HEK293T (cell line): ENCODE measurements at regions of chr17 and their contacts with region 1.

Region 1: DNA sequence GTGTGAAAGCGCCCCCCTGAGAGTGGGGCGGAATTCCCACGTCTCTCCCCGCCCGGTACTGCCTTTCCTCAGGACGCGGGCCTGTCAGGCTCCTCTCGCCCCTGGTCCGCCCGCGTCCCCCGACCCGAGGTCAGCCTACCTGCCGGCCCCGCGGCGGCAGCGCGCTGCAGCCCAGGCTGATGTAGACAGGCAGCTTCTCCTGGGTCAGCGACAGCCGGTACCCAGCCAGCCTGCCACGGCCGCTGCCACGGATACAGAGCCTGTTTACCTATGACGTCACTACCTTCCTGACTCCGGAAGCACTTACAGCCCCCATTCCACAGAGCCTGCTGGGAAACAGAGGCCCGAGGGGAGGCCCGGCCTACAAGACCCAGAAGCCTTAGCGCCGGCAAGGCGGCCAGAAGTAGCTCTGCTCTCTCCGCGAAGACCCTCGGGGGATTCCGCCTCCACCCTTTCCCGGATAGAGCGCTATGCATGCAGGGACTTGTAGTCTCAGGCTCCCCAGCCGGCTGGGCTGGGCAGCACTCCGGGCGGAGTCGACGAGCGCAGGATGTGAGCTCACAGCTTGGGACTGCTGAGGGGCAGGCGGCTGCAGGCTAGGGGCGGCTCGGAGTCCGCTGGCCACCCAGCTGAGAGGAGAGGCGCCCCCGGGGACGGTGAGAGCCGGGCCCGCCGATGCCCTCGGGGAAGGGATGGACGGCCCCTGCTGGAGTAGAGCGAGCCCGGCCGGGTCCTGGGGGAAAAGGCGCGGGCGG is at the starts of genes IFT20 and TNFAIP1:
- DNase-seq: peak; percentile 88

Region 2: DNA sequence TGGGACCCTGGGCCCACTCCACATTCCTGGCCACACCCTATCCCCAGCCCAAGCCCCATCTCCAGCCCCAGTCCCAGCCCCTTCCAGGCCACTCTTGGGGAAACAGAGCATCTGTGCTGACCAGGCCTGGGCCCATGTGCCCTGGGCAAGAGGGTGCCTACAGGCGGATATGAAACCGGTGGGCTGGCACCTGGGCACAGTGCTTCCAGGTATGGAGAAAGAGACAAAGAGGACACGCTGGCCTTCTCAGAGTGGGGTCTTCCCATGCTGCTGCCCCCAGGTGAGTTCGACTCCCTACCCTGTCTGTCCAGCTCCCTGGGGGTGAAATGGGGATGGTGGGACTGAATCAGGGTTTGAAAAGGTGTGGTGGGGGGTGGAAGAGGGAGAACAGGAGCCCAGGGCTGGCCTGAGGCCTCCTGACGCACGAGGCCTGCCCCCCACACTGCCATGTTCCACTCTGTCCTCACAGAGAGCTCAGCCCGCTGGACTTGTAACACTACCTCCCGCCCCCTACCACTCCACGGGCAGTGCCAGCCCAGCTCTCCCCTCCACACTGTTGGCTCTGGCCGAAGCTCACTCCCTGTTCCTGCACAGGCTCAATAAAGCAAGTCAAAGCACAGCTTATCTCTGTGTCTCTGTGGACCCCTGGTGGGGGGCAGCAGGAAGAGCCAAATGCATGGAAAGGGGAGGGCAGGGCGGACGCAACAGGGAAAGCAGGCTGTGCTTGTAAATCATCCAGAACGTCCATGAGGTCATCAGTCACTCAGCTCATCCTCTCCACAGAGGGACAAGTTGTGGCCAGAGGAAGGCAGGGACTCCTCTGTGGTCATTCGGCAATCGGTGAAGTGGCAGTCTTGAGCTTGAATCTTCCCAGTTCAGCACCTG is 87.5 kb before region 1 on chr17:
- CTCF ChIA-PET with region 1: interaction called, 4 read pairs
- POLR2A ChIA-PET with region 1: interaction called, 17 read pairs
- DNase-seq: no peak

Region 3: GRCh38 chr17:28346746-28347246 is 11.4 kb after region 1 on chr17:
- CTCF ChIA-PET with region 1: interaction called, 3 read pairs
- POLR2A ChIA-PET with region 1: interaction called, 18 read pairs
- DNase-seq: no peak

Region 4: DNA sequence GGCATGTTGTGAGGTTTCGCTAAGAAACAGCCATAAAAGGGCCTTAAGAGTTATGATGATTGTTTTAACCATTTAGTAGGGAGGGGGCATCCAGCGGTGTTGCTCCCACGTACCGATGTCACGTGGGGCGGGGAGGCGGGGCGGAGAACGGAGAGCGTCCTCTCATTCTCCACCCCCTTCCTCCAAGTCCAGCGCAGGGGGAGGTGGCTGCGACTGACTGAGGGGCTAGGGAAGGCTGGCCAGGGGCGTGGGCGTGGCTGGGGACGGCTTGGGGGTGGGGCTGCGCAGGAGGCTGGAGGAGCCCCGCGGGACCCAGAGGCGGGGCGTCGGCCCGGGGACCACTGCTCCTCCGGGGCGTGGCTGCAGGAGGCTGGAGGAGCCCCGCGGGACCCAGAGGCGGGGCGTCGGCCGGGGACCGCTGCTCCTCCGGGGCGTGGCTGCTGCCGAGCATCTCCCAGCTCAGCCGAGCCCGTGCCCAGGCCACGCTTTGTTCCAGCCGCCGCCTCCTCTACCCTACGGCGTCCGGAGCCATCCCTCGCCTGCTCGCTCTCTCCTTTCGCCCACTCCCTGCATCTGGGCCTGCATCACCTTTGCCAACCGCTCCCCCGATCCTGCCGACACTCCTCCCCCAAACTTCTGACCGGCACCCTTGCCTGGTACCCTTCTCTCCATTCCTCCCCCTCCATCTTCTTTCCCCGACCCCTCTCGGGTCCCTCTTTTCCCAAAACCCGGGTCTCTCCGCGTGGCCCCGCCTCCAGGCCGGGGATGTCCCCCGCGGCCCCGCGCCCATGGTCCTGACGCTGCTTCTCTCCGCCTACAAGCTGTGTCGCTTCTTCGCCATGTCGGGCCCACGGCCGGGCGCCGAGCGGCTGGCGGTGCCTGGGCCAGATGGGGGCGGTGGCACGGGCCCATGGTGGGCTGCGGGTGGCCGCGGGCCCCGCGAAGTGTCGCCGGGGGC is 36.1 kb after region 1 on chr17 and contains the start of gene SARM1:
- CTCF ChIA-PET with region 1: interaction called, 3 read pairs
- POLR2A ChIA-PET with region 1: interaction called, 17 read pairs
- DNase-seq: peak; percentile 83

Region 5: DNA sequence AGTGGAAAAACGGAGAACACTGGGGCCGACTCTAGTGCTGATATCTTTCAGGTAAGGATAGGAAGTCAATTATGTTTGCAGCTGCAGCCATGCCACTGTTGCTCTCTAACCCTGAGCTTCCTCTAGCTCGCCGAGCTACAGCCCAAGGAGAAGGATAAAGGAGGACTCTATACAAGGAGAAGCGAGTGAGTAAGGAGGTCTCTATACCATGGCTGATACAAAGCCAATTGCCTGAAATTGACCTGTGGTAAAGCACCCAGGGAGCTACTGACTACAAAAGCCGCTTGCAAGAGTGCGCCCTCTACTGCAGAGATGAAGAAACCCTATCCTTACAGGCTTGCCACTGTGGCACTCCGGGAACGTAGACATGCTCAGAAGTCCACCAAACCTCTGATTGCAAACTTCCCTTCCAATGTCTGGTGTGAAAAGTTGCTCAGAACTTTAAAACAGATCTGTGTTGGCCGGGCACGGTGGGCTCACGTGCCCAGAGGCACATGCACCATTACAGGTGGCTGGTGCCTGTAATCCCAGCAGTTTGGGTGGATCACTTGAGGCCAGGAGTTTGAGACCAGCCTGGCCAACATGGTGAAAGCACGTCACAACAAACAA is 81.4 kb after region 1 on chr17:
- CTCF ChIA-PET with region 1: interaction called, 10 read pairs
- POLR2A ChIA-PET with region 1: interaction called, 7 read pairs
- DNase-seq: peak; percentile 65